CD8-positive, alpha-beta T cell (primary cell): ENCODE measurements at regions of chr1 and their contacts with region 1.

Region 1: GRCh38 chr1:226656601-226657277 is 82.3 kb downstream of the ITPKB start:
- DNase-seq: peak in 6 of 9 experiments; percentile 39 to 91 (median 71)
- ATAC-seq: peak; percentile 68
- H3K4me3 ChIP-seq: no peak overlapping the region
- H3K4me3 Mint-ChIP-seq: peak overlapping the region; percentile 61
- H3K27ac ChIP-seq: no peak overlapping the region
- H3K27ac Mint-ChIP-seq: no peak overlapping the region
- H3K4me1 ChIP-seq: no peaks in the 10 kb centered on the region
- H3K4me1 Mint-ChIP-seq: peaks cover 30% of the 10 kb centered on the region
- H3K27me3 ChIP-seq: no peaks in the 10 kb centered on the region
- H3K27me3 Mint-ChIP-seq: no peaks in the 10 kb centered on the region
- CTCF ChIP-seq: no peak

Region 2: GRCh38 chr1:226642876-226643576 is 13.7 kb before region 1 on chr1:
- CTCF ChIA-PET with region 1: interaction called, 8 read pairs
- POLR2A ChIA-PET with region 1: interaction called, 9 read pairs
- intact Hi-C with region 1: loop called in 1 of 2 experiments (anchors 1 kb)
- DNase-seq: peak in 6 of 9 experiments; percentile 49 to 73 (median 66)
- ATAC-seq: peak; percentile 76
- H3K4me3 ChIP-seq: no peak overlapping the region
- H3K4me3 Mint-ChIP-seq: peak overlapping the region; percentile 54
- H3K27ac ChIP-seq: peak overlapping the region; percentile 27 to 34
- H3K27ac Mint-ChIP-seq: peak overlapping the region; percentile 89
- H3K4me1 ChIP-seq: peaks cover 57% of the 10 kb centered on the region
- H3K4me1 Mint-ChIP-seq: peaks cover 55% of the 10 kb centered on the region
- H3K27me3 ChIP-seq: no peaks in the 10 kb centered on the region
- H3K27me3 Mint-ChIP-seq: no peaks in the 10 kb centered on the region
- CTCF ChIP-seq: no peak

Region 3: GRCh38 chr1:227298512-227299240 is 641.9 kb after region 1 on chr1:
- CTCF ChIA-PET with region 1: no interaction called
- POLR2A ChIA-PET with region 1: no interaction called
- intact Hi-C with region 1: no loop called
- DNase-seq: no peak
- ATAC-seq: no peak
- H3K4me3 ChIP-seq: no peak overlapping the region
- H3K4me3 Mint-ChIP-seq: no peak overlapping the region
- H3K27ac ChIP-seq: no peak overlapping the region
- H3K27ac Mint-ChIP-seq: no peak overlapping the region
- H3K4me1 ChIP-seq: no peaks in the 10 kb centered on the region
- H3K4me1 Mint-ChIP-seq: no peaks in the 10 kb centered on the region
- H3K27me3 ChIP-seq: peaks cover 0 to 5% of the 10 kb centered on the region in 2 experiments
- H3K27me3 Mint-ChIP-seq: peaks cover 14% of the 10 kb centered on the region
- CTCF ChIP-seq: no peak